Panc1 (cell line): ENCODE measurements at regions of chr13 and their contacts with region 1.

Region 1: DNA sequence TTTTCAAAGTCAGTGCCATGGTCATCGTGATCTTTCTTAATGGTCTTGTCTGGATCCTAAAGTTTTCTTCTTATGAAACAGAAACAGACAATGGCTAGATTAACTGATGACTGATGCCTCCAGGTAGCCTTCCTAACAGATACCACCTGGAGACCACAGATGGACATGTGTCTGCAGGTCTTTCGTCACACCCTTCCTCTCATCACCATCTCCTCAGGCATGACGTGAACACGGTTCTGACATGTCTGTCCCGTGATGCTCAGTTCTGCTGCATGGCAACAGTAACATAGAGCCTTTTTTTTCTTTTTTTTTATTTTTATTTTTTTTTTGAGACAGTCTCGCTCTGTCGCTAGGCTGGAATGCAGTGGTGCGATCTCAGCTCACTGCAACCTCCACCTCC is 13.1 kb upstream of the LAMP1 start:
- DNase-seq: no peak
- ATAC-seq: no peak
- H3K4me3 ChIP-seq: no peak overlapping the region
- H3K27ac ChIP-seq: no peak overlapping the region
- H3K4me1 ChIP-seq: no peaks in the 10 kb centered on the region
- H3K27me3 ChIP-seq: no peaks in the 10 kb centered on the region
- CTCF ChIP-seq: no peak

Region 2: GRCh38 chr13:113305208-113305607 is 21.3 kb after region 1 on chr13:
- CTCF ChIA-PET with region 1: interaction called, 13 read pairs
- POLR2A ChIA-PET with region 1: no interaction called
- in situ Hi-C with region 1: no loop called
- intact Hi-C with region 1: no loop called
- DNase-seq: no peak
- ATAC-seq: no peak
- H3K4me3 ChIP-seq: no peak overlapping the region
- H3K27ac ChIP-seq: no peak overlapping the region
- H3K4me1 ChIP-seq: no peaks in the 10 kb centered on the region
- H3K27me3 ChIP-seq: no peaks in the 10 kb centered on the region
- CTCF ChIP-seq: no peak